ENCODE measurements at regions of chr3 and their contacts with region 1.

Region 1: GRCh38 chr3:30693470-30694120 is 87.2 kb downstream of the TGFBR2 start:
- DNase-seq: peak in 1 of 2 experiments; percentile 65
- H3K4me3 ChIP-seq: no peak overlapping the region
- H3K4me3 Mint-ChIP-seq: no peak overlapping the region
- H3K27ac Mint-ChIP-seq: no peak overlapping the region
- H3K4me1 ChIP-seq: peaks cover 31% of the 10 kb centered on the region
- H3K4me1 Mint-ChIP-seq: peaks cover 40% of the 10 kb centered on the region
- H3K27me3 ChIP-seq: no peaks in the 10 kb centered on the region
- H3K27me3 Mint-ChIP-seq: no peaks in the 10 kb centered on the region
- CTCF ChIP-seq: peak; percentile 77 to 79

Region 2: GRCh38 chr3:30112902-30113484 is 580.6 kb before region 1 on chr3:
- CTCF ChIA-PET with region 1: no interaction called
- POLR2A ChIA-PET with region 1: no interaction called
- intact Hi-C with region 1: loop called (anchors 2 kb)
- DNase-seq: peak in 1 of 2 experiments; percentile 33
- H3K4me3 ChIP-seq: no peak overlapping the region
- H3K4me3 Mint-ChIP-seq: no peak overlapping the region
- H3K27ac Mint-ChIP-seq: no peak overlapping the region
- H3K4me1 ChIP-seq: peaks cover 12% of the 10 kb centered on the region
- H3K4me1 Mint-ChIP-seq: peaks cover 21% of the 10 kb centered on the region
- H3K27me3 ChIP-seq: no peaks in the 10 kb centered on the region
- H3K27me3 Mint-ChIP-seq: no peaks in the 10 kb centered on the region
- CTCF ChIP-seq: peak; percentile 45 to 52

Region 3: DNA sequence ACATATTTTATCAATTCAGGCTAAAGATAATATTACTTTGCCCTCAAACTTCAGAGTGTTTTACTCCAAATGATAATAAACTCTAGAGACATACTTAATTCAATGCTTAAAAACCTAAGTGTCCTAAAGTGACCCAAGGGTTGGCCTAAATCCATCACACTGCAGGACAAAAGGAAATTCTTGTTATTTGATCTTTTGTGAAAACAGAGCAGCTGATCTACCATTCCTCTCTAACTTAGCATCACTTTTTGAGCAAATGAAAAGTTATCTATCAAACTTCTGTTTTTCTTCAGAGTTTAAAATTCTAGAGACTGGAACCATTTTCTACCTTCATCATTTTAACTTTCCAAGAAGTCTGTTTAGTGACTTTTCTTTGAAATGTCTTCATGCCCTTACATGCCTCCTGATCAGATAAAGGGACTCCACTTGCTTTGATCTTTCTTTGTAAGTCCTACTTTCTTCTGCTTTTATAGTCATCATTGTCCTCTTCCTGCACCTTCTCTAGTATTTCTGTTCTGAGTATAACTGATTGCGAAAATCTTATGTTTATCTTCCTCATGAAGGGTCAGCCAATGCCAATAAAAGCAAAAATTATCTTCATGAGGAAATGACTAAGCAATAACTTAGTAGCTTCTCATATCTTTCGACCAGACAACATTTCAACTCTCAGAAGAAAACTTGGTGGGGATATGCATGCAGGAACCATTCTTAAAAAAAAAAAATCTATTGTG is 465.9 kb before region 1 on chr3:
- CTCF ChIA-PET with region 1: no interaction called
- POLR2A ChIA-PET with region 1: no interaction called
- intact Hi-C with region 1: loop called (anchors 10 kb)
- DNase-seq: peak in 1 of 2 experiments; percentile 60
- H3K4me3 ChIP-seq: no peak overlapping the region
- H3K4me3 Mint-ChIP-seq: peak overlapping the region; percentile 47
- H3K27ac Mint-ChIP-seq: peak overlapping the region; percentile 85
- H3K4me1 ChIP-seq: peaks cover 33% of the 10 kb centered on the region
- H3K4me1 Mint-ChIP-seq: peaks cover 20% of the 10 kb centered on the region
- H3K27me3 ChIP-seq: no peaks in the 10 kb centered on the region
- H3K27me3 Mint-ChIP-seq: no peaks in the 10 kb centered on the region
- CTCF ChIP-seq: no peak

Region 4: GRCh38 chr3:30511524-30512278 is 181.9 kb before region 1 on chr3:
- CTCF ChIA-PET with region 1: interaction called, 3 read pairs
- POLR2A ChIA-PET with region 1: no interaction called
- intact Hi-C with region 1: loop called (anchors 10 kb)
- DNase-seq: peak; percentile 65 to 68
- H3K4me3 ChIP-seq: no peak overlapping the region
- H3K4me3 Mint-ChIP-seq: peak overlapping the region; percentile 17
- H3K27ac Mint-ChIP-seq: peak overlapping the region; percentile 43
- H3K4me1 ChIP-seq: peaks cover 22% of the 10 kb centered on the region
- H3K4me1 Mint-ChIP-seq: peaks cover 11% of the 10 kb centered on the region
- H3K27me3 ChIP-seq: no peaks in the 10 kb centered on the region
- H3K27me3 Mint-ChIP-seq: no peaks in the 10 kb centered on the region
- CTCF ChIP-seq: no peak

Region 5: GRCh38 chr3:30720586-30721313 is 27.2 kb after region 1 on chr3:
- CTCF ChIA-PET with region 1: no interaction called
- POLR2A ChIA-PET with region 1: no interaction called
- intact Hi-C with region 1: loop called (anchors 1 kb)
- DNase-seq: peak in 1 of 2 experiments; percentile 71
- H3K4me3 ChIP-seq: no peak overlapping the region
- H3K4me3 Mint-ChIP-seq: peak overlapping the region; percentile 26
- H3K27ac Mint-ChIP-seq: peak overlapping the region; percentile 83
- H3K4me1 ChIP-seq: peaks cover 34% of the 10 kb centered on the region
- H3K4me1 Mint-ChIP-seq: peaks cover 34% of the 10 kb centered on the region
- H3K27me3 ChIP-seq: no peaks in the 10 kb centered on the region
- H3K27me3 Mint-ChIP-seq: no peaks in the 10 kb centered on the region
- CTCF ChIP-seq: no peak

Region 6: DNA sequence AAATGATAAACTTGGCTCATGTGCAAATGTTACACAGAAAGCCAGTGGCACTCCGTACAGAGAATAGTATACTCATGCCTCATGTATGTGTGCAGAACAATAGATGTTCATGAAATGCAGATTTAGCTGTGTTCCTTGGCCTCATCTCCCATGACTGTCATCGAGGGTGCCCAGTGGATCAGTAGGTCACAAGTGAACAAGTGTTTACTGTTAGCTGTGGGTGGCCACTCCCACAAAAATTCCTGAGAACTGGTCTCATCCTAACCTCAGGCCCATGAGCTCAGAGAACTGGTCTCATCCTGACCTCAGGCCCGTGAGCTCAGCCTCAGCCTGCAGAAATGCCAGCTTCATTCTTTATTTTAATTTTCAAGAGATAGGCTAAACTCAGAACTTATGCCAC is 76.8 kb after region 1 on chr3:
- CTCF ChIA-PET with region 1: no interaction called
- POLR2A ChIA-PET with region 1: no interaction called
- intact Hi-C with region 1: no loop called
- DNase-seq: peak; percentile 47 to 63
- H3K4me3 ChIP-seq: no peak overlapping the region
- H3K4me3 Mint-ChIP-seq: no peak overlapping the region
- H3K27ac Mint-ChIP-seq: no peak overlapping the region
- H3K4me1 ChIP-seq: peaks cover 14% of the 10 kb centered on the region
- H3K4me1 Mint-ChIP-seq: no peaks in the 10 kb centered on the region
- H3K27me3 ChIP-seq: no peaks in the 10 kb centered on the region
- H3K27me3 Mint-ChIP-seq: no peaks in the 10 kb centered on the region
- CTCF ChIP-seq: no peak

Region 7: DNA sequence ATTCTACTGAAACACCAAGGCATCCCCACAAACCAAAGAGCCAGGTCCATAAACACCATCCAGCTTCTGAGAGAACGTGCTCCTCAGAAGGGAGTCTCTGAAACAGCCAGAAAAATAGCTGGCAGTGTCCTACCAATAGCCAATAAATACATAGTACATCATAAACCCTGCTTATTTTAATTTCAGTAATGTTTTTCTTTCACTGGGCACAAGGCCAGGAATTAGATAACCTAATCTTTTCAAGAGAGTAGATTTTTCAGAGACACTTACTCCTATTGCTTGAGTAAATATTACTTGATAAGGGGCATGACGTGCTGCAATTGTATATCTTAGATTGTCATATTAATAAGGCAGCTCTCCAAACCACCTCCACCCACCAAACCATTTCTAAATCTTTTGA is 178.1 kb after region 1 on chr3:
- CTCF ChIA-PET with region 1: no interaction called
- POLR2A ChIA-PET with region 1: no interaction called
- intact Hi-C with region 1: no loop called
- DNase-seq: no peak
- H3K4me3 ChIP-seq: no peak overlapping the region
- H3K4me3 Mint-ChIP-seq: no peak overlapping the region
- H3K27ac Mint-ChIP-seq: no peak overlapping the region
- H3K4me1 ChIP-seq: no peaks in the 10 kb centered on the region
- H3K4me1 Mint-ChIP-seq: no peaks in the 10 kb centered on the region
- H3K27me3 ChIP-seq: no peaks in the 10 kb centered on the region
- H3K27me3 Mint-ChIP-seq: no peaks in the 10 kb centered on the region
- CTCF ChIP-seq: no peak

Region 8: GRCh38 chr3:32310918-32311839 is 1617.6 kb after region 1 on chr3:
- CTCF ChIA-PET with region 1: no interaction called
- POLR2A ChIA-PET with region 1: no interaction called
- intact Hi-C with region 1: no loop called
- DNase-seq: no peak
- H3K4me3 ChIP-seq: no peak overlapping the region
- H3K4me3 Mint-ChIP-seq: no peak overlapping the region
- H3K27ac Mint-ChIP-seq: peak overlapping the region; percentile 34
- H3K4me1 ChIP-seq: peaks cover 12% of the 10 kb centered on the region
- H3K4me1 Mint-ChIP-seq: peaks cover 15% of the 10 kb centered on the region
- H3K27me3 ChIP-seq: no peaks in the 10 kb centered on the region
- H3K27me3 Mint-ChIP-seq: no peaks in the 10 kb centered on the region
- CTCF ChIP-seq: no peak

Measured in Caco-2 (cell line).